Sciatic nerve (tissue), 2 donors: ENCODE measurements at regions of chr15 and their contacts with region 1.

Region 1: GRCh38 chr15:71629781-71630474 is 180.4 kb upstream of the NR2E3 start:
- DNase-seq: no peak
- ATAC-seq: peak; percentile 86

Region 2: GRCh38 chr15:71807691-71808091 is 177.8 kb after region 1 on chr15:
- intact Hi-C with region 1: no loop called
- DNase-seq: no peak
- ATAC-seq: no peak

Region 3: GRCh38 chr15:71883447-71883846 is 253.5 kb after region 1 on chr15:
- intact Hi-C with region 1: no loop called
- DNase-seq: no peak
- ATAC-seq: no peak

Region 4: DNA sequence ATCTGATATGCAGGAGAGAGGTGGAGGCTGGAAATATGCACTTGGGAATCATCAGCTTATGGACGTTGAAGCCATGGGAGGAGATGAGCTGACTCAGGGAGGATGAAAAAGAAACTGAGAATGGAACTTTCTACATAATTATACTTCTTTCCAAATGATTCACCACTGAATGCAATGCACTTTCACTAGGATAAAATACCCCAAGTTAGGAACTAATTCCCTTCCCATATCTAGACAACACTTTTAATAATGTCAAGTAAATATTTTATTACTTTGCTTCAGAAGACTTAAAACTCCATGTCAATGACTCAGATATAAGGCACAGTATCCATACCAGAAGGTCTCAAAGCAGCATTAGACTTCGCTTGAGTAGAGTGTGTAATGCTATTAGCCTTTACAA is 1979.0 kb after region 1 on chr15:
- intact Hi-C with region 1: loop called (anchors 5 kb)
- DNase-seq: no peak
- ATAC-seq: no peak